ENCODE measurements at regions of chr15 and their contacts with region 1.

Region 1: DNA sequence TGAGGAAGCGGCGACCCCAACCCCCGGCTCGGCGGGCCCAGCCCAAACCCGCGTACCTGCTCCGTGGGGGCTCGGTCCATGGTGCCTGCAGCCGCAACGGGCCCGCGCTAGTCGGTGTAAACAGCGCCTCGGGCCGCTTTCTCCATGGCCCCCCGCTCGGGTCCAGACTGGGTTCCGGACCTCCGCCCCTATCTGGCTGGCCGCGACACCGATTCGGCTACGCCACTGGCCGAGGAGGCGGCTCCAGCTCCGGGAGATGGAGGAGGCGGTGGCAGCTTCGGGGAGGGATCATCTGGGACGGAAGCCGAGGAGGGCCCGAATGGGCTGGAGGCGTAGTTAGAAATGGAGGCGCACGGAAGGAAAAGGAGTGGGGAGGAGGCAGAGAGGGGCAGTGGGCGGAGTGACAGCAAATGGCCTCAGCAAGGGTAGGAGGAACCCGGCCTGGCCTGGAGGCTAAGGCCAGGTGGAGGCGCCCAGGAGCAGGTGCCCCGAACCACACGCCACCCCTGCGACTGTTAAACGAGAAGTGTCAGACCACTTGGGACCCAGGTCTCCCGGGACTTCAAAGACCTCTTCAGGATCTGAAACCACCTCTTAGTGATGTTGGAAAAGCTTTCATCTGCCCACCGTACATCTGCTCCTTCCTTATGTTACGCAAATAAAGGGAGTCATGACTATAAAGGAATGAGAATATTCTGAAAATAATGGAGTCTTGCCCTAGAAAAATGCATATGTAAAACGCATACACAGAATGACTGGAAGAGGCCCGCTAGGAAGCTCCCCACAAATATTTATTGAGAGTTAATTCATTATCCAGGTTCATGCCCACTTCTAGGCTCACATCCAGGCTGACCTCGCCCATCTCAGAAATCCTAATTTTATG is at the start of gene SECISBP2L:
- DNase-seq: peak; percentile 95
- H3K4me3 Mint-ChIP-seq: peak within 1 kb of the TSS; percentile 91
- H3K27ac Mint-ChIP-seq: peak within 1 kb of the TSS; percentile 81
- H3K4me1 Mint-ChIP-seq: peaks cover 19% of the 10 kb centered on the region
- H3K27me3 Mint-ChIP-seq: no peaks in the 10 kb centered on the region
- total RNA-seq, gene SECISBP2L: 17.4 to 18.6 TPM

Region 2: DNA sequence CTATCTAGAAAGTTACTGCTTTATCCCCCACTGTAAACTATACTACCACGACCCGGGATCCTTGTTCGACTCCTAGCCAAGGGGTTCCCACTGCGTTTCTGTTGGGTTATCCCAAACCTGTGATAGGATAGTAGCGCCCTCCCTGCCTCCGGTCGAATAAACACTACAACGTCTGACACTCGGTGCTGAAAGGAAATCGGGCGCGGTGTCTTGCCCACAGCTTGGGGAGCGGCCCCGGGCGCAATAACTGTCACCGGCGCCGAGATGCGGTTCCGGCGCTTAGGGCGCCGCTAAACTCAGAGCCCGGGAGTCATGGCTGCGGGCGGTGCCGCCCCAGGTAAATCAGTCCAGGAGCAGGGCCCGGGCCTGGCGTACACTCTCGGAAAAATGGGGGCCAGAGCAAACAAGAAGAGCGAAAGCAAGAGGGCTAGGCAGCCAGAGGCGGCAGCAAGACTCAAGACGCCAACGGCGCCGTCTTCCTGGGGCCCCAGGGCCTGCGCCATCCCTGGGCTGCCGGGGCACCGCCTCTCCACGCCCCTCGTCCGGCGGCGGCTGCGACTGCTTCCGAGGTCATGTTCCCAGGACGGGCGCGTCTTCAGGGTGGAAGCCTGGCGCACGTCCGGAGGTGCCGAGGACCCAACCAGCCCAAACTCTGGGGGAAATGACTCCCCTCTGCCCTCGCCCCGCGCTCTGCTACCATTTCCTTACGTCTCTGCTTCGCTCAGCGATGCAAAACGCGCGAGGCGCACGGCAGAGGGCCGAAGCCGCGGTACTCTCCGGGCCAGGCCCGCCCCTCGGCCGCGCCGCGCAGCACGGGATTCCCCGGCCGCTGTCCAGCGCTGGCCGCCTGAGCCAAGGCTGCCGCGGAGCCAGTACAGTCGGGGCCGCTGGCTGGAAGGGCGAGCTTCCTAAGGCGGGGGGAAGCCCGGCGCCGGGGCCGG is 715.3 kb before region 1 on chr15 and contains the start of gene DUT:
- CTCF ChIA-PET with region 1: no interaction called
- intact Hi-C with region 1: loop called (anchors 1 kb)
- DNase-seq: peak; percentile 84
- H3K4me3 Mint-ChIP-seq: peak within 1 kb of the TSS; percentile 95
- H3K27ac Mint-ChIP-seq: peak within 1 kb of the TSS; percentile 97
- H3K4me1 Mint-ChIP-seq: peaks cover 37% of the 10 kb centered on the region
- H3K27me3 Mint-ChIP-seq: no peaks in the 10 kb centered on the region
- total RNA-seq, gene DUT: 605 to 628 TPM

Region 3: GRCh38 chr15:48616216-48616615 is 430.2 kb before region 1 on chr15:
- CTCF ChIA-PET with region 1: no interaction called
- intact Hi-C with region 1: no loop called
- DNase-seq: no peak
- H3K4me3 Mint-ChIP-seq: no peak overlapping the region
- H3K27ac Mint-ChIP-seq: no peak overlapping the region
- H3K4me1 Mint-ChIP-seq: no peaks in the 10 kb centered on the region
- H3K27me3 Mint-ChIP-seq: peaks cover 2% of the 10 kb centered on the region

Region 4: DNA sequence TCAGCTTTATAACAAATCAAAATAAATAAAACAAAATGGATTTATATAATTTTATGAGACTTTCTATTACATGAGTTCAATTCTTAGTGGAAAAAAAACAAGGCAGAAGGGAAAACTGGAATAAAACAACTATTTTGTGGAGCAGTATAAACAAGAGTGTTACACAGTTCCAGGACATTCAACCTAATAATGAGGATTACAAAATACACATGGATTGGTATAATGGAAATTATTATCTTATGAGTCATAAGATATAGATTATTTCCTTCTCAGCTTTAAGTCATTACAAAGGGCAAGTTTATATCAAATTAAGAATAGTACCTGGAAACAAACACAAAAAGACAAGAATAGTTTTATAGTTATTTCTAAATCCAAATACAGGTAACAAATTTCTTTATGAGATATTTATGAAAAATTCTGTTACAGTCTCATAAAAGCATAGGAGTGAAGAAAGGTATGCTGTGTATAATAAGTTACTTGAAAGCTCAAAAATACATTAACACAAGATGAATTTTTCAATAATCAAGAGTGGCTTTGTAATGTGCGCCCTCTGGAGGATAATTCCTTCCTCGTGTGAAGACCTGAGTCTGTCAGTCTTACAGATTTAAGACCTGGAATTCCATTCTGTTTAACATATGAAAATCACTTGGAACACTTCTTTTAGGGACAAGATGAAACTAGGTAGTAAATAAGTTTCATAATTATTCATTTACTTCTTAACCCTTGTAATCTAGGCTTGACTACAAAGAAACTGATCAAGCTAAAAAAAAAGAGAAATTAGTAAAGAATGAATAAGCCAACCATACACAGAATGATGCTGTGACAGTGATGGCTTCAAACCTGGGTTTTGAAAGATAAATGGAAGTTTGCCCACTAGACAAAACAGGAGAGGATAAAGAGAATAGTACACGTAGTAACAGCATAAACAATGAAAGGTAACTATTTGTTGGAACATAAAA is 99.5 kb after region 1 on chr15:
- CTCF ChIA-PET with region 1: interaction called, 4 read pairs
- intact Hi-C with region 1: loop called (anchors 1 kb)
- DNase-seq: peak; percentile 52
- H3K4me3 Mint-ChIP-seq: no peak overlapping the region
- H3K27ac Mint-ChIP-seq: no peak overlapping the region
- H3K4me1 Mint-ChIP-seq: peaks cover 43% of the 10 kb centered on the region
- H3K27me3 Mint-ChIP-seq: no peaks in the 10 kb centered on the region

Region 5: GRCh38 chr15:49169880-49170597 is 123.6 kb after region 1 on chr15 and contains the start of gene GALK2:
- CTCF ChIA-PET with region 1: no interaction called
- intact Hi-C with region 1: loop called (anchors 1 kb)
- DNase-seq: peak; percentile 91
- H3K4me3 Mint-ChIP-seq: peak within 1 kb of the TSS; percentile 96
- H3K27ac Mint-ChIP-seq: peak within 1 kb of the TSS; percentile 94
- H3K4me1 Mint-ChIP-seq: peaks cover 25% of the 10 kb centered on the region
- H3K27me3 Mint-ChIP-seq: no peaks in the 10 kb centered on the region
- total RNA-seq, gene GALK2: 22.6 to 24.1 TPM

Region 6: DNA sequence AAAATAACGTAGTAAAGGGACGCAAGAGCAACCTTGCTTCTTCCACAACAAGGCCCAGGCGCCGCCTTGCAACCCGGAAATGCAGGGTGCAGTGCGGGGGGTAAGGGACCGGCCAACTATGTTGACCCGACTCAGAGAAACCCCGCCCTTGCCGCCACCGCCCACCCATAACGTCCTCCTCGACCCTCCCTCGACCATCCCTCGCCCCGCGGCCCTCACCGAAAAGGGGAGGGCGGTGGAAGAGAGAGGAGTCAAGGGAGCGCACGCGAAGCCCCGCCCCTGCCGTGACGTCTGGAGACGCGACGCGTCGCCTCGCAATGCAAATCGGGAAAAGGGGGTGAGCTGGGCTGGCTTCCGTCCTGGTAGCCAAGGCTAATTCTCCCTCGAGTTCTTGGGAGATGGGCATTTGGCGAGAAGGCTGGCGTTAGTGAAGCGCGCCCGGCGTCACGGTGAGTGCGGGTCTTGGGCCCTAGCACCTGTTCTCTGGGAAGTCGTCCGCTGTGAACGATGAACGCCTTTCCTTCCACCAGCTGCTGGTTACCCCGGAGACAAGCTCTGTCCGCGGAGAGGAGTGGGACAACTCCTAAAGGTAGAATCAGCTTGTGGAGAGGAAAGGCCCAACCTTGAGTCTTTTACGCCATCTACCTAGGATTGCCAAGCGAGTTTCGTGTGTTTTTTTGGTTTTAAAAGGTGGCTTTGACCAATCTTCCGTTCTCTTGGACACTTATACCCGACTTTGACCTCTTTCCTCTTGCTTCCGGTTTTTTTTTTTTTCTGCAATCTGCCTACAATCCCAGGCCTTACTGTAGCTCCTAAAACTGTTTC is 1377.8 kb after region 1 on chr15 and contains the start of gene USP8:
- CTCF ChIA-PET with region 1: no interaction called
- intact Hi-C with region 1: loop called (anchors 1 kb)
- DNase-seq: peak; percentile 96
- H3K4me3 Mint-ChIP-seq: peak within 1 kb of the TSS; percentile 94
- H3K27ac Mint-ChIP-seq: peak within 1 kb of the TSS; percentile 92
- H3K4me1 Mint-ChIP-seq: peaks cover 30% of the 10 kb centered on the region
- H3K27me3 Mint-ChIP-seq: no peaks in the 10 kb centered on the region
- total RNA-seq, gene USP8: 31.6 TPM

Measured in activated naive CD4-positive, alpha-beta T cell treated with anti-CD3 and anti-CD28 coated beads for 36 hours (primary cell).